Activated naive CD4-positive, alpha-beta T cell treated with anti-CD3 and anti-CD28 coated beads for 36 hours (primary cell): ENCODE measurements at regions of chr11 and their contacts with region 1.

Region 1: DNA sequence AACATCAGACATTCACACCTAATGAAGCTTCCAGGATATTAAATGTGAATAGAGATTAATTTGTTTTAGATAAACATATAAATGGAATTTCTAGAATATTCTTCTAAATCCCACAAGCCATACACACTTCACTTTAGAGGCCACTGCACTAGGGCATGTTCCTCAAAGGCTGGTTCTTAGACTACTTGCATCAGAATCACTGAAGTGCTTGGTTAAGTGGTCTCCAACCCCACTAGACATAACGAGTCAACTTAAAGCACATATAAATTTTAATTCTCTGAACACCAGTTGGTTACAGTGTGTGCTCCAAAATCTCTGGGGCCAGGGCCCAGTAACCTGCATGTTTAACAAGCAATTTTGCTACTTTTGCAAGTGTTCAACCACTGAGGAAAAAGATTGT is 7.9 kb upstream of the ALKBH8 start:
- DNase-seq: no peak
- H3K4me3 Mint-ChIP-seq: no peak overlapping the region
- H3K27ac Mint-ChIP-seq: no peak overlapping the region
- H3K4me1 Mint-ChIP-seq: no peaks in the 10 kb centered on the region
- H3K27me3 Mint-ChIP-seq: no peaks in the 10 kb centered on the region

Region 2: DNA sequence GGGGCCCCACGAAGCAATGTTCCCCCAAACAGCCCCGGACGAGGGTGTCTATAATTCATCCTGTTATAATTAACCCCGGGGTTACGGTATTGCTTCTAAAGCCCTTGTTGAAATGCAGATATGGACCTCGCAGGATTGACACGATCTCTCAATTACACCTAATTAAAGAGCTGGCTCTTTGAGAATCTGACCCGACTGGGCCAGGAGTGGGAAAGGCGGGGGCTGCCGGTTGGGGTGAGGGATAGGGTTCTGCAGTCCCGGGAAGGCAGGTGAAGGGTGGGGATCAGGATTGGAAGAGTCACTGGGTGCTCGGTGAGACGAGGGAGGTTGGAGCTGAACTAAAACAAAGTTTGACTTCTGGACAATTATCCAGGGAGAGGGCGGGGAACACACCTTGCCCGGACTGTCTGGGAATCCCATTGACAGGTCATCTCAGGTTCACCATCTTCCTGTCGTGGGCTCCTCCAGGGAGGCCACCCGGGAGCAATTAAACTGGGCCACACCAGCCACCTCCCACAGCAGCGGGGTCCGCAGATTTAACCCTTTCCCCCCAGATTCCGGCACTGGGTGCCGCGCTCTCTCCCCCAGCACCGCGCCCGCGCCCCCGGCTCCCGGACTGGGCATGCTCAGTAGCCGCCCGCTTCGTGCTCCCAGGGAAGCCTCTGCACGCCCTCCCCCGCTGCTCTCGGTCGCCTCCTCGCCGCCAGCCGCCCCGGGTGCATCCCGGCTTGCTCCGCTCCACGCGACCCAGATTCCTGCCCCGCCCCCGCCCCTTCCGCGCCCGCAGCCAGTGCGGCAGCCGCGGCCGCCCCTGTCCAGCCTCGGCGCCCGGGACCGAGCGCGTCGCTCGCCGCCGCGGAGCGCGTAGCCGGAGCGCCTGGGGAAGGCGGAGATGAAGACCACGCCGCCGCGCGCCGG is 17.3 kb after region 1 on chr11 and contains the start of gene ELMOD1:
- CTCF ChIA-PET with region 1: interaction called, 8 read pairs
- intact Hi-C with region 1: loop called (anchors 1 kb)
- DNase-seq: peak; percentile 57
- H3K4me3 Mint-ChIP-seq: peak within 1 kb of the TSS; percentile 77
- H3K27ac Mint-ChIP-seq: no peak within 1 kb of the TSS
- H3K4me1 Mint-ChIP-seq: peaks cover 22% of the 10 kb centered on the region
- H3K27me3 Mint-ChIP-seq: peaks cover 71% of the 10 kb centered on the region
- total RNA-seq, gene ELMOD1: not detected

Region 3: DNA sequence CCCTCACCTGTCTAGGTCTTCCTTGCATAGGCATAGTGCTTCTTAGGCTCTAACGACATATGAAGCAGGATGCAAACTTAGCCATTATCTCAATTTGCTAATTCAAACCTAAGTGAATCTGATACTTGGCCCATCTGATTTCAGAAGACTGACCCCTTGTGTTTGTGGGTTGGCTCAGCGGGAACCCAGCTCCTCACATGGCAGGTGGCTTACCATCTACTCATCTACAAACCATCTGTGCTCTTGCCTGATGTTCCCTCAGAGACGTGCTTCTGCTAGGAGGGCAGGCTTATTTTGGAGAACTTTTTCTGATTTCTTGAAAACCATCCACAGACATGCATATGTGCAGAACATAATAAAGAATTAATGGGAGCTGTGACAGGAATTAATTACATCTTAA is 32.7 kb after region 1 on chr11:
- CTCF ChIA-PET with region 1: interaction called, 4 read pairs
- intact Hi-C with region 1: loop called (anchors 1 kb)
- DNase-seq: no peak
- H3K4me3 Mint-ChIP-seq: no peak overlapping the region
- H3K27ac Mint-ChIP-seq: no peak overlapping the region
- H3K4me1 Mint-ChIP-seq: no peaks in the 10 kb centered on the region
- H3K27me3 Mint-ChIP-seq: peaks cover 48% of the 10 kb centered on the region

Region 4: GRCh38 chr11:107689317-107690202 is 116.1 kb after region 1 on chr11:
- CTCF ChIA-PET with region 1: interaction called, 41 read pairs
- intact Hi-C with region 1: loop called (anchors 1 kb)
- DNase-seq: peak; percentile 81
- H3K4me3 Mint-ChIP-seq: no peak overlapping the region
- H3K27ac Mint-ChIP-seq: no peak overlapping the region
- H3K4me1 Mint-ChIP-seq: no peaks in the 10 kb centered on the region
- H3K27me3 Mint-ChIP-seq: peaks cover 13% of the 10 kb centered on the region

Region 5: GRCh38 chr11:107770551-107770951 is 197.1 kb after region 1 on chr11:
- CTCF ChIA-PET with region 1: interaction called, 6 read pairs
- intact Hi-C with region 1: loop called (anchors 2 kb)
- DNase-seq: no peak
- H3K4me3 Mint-ChIP-seq: no peak overlapping the region
- H3K27ac Mint-ChIP-seq: no peak overlapping the region
- H3K4me1 Mint-ChIP-seq: no peaks in the 10 kb centered on the region
- H3K27me3 Mint-ChIP-seq: peaks cover 4% of the 10 kb centered on the region

Region 6: GRCh38 chr11:107898270-107898669 is 324.8 kb after region 1 on chr11:
- CTCF ChIA-PET with region 1: interaction called, 3 read pairs
- intact Hi-C with region 1: loop called (anchors 1 kb)
- DNase-seq: no peak
- H3K4me3 Mint-ChIP-seq: no peak overlapping the region
- H3K27ac Mint-ChIP-seq: no peak overlapping the region
- H3K4me1 Mint-ChIP-seq: no peaks in the 10 kb centered on the region
- H3K27me3 Mint-ChIP-seq: no peaks in the 10 kb centered on the region